Activated CD8-positive, alpha-beta memory T cell treated with anti-CD3 and anti-CD28 coated beads, Interleukin-2, amount 10 ng/mL, durations not matched to agents 7 days and 5 days (primary cell): ENCODE measurements at regions of chr15 and their contacts with region 1.

Region 1: DNA sequence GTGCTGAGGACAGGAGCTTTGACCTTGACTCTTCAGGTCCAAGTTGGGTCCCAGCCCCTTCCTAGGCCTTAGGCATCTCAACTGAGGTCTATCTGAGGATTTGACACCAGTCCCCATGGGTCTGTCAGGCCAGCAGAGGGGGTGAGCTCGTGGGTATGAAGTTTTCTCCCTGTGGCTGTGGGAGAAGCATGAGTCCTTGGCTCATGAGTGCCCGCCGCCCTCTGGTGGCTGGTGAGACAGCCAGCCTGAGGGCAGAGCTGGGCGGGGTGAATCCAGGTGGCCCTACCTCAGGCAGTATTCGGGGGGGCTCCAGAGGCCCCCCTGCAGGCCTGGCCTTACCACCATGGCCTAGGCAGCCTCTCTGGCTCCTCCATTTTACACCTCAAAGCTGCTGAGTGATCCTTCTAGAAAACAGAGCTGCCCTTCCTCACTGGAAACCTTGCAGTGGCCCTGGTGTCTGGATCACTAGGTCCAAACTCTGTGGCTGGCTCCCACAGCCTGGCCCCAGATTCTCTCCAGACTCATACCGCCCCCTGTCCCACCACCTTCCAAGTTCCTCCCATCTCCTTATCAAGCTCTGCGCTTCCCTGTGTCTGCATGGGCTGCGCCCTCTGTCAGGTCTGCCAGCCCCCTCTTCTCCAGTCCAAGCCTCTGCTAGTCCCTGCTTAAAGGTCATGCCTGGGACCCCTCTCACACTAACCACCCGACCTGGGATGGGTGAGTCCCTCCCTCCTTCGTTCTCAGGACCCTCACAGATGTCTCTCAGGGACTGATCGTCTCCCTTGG is 16.1 kb downstream of the SH2D7 start:
- DNase-seq: peak; percentile 92
- ATAC-seq: peak; percentile 71
- H3K4me3 Mint-ChIP-seq: no peak overlapping the region
- H3K27ac Mint-ChIP-seq: no peak overlapping the region
- H3K4me1 Mint-ChIP-seq: peaks cover 56% of the 10 kb centered on the region
- H3K27me3 Mint-ChIP-seq: no peaks in the 10 kb centered on the region

Region 2: GRCh38 chr15:77959432-77959879 is 149.0 kb before region 1 on chr15:
- CTCF ChIA-PET with region 1: interaction called, 189 read pairs
- DNase-seq: peak; percentile 86
- ATAC-seq: peak; percentile 98
- H3K4me3 Mint-ChIP-seq: peak overlapping the region; percentile 63
- H3K27ac Mint-ChIP-seq: no peak overlapping the region
- H3K4me1 Mint-ChIP-seq: peaks cover 27% of the 10 kb centered on the region
- H3K27me3 Mint-ChIP-seq: peaks cover 52% of the 10 kb centered on the region

Region 3: DNA sequence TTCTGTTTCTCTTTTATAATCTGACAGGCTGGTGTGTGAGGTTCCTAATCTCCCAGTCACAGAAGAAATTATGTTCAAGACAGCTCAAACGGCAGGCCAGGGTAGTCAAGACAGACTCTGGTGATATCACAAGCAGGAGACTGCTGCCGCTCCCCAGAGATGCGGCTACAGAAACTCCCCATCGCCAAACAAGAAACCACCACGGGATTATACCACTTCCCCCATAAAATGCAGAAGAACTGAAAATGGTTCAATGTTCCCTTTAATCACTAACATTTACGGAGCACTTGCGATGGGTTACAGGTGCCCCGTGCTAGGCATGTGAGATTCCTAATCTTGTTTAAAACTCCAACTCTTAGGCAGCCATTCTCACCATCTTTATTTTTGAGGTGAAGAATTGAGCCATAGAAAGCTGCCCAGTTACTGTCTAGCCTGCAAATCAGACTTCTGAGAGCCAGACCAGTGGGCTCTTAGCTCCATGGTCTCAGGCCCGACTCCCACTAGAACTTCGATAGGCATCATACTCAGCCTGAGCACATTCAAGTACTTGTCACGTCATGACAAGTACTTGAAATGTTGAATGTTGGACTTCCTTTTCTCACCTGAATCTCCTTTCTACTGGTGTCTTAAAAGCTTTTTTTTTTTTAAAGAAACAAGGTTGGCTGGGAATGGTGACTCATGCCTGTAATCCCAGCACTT is 89.4 kb before region 1 on chr15:
- CTCF ChIA-PET with region 1: interaction called, 23 read pairs
- DNase-seq: peak; percentile 67
- ATAC-seq: peak; percentile 80
- H3K4me3 Mint-ChIP-seq: peak overlapping the region; percentile 21
- H3K27ac Mint-ChIP-seq: peak overlapping the region; percentile 50
- H3K4me1 Mint-ChIP-seq: peaks cover 26% of the 10 kb centered on the region
- H3K27me3 Mint-ChIP-seq: no peaks in the 10 kb centered on the region

Region 4: DNA sequence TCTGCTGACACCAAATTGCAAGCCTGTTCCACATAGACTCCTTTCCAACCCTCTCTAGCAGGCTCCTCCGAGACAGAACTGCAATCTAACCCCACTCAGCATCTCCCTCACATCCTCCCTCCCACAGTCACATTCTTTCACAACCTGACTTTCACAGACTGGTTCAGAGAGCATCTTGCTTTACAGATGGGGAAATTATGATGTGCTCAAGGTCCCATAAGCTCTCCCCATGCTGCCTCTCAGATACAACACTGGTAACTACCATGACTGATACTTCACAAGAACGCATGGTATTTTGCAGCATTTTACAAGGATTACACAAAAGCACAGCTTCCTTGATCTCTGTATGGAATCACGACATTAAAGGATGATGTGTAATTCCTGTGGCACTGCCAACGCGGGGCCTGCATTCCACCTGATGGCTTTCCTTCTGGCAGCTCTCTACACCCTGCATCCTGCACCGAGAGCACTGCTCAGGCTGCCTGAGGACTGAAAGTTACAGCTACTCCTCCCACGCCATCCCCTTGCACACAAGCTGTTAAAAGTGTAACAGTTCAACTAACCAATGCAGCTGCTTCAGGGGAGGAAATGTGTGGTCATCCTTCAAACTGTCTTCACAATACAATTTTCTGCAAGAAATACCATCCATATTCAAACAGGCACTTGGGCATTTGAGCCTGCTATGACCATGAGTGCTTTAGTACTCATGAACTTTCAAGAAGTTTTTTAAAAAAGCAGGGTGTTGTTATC is 58.6 kb before region 1 on chr15:
- CTCF ChIA-PET with region 1: interaction called, 41 read pairs
- DNase-seq: peak; percentile 88
- ATAC-seq: peak; percentile 77
- H3K4me3 Mint-ChIP-seq: peak overlapping the region; percentile 48
- H3K27ac Mint-ChIP-seq: peak overlapping the region; percentile 94
- H3K4me1 Mint-ChIP-seq: peaks cover 96% of the 10 kb centered on the region
- H3K27me3 Mint-ChIP-seq: no peaks in the 10 kb centered on the region

Region 5: DNA sequence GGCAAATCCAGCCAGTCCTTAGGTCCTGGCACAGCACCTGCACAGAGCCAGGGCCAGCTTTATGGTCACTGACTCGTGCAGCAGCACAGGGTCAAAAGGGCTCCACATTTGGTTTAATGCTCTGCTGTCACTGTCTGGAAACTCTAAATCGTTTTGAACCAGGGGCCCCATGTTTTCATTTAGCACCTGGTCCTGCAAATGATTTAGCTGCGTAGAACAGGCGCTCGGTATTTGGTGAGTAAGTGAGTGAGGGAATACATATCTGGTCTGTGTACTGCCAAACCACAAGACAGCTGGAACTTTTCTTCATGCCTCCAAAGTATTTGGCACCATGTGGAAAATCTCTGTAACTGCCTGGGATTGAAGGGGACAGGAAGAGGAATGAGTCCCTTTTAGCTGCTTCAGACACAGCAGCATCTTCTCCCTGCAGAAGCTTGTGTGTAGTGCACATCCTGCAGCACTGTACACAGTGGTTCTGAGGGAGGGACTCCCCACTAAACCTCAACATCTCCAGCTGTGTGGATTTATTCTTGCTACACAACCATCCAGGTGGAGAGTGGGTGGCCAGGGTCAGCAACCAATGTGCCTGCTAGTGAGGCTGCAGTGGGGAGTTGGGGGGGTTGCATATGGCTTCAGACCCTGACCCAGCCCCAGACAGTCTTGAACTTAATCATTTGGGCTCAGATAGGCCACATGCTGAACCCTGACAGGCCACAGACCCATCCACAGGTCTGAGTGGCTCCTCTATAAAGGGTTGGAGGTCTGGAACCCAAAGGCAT is 15.1 kb before region 1 on chr15:
- CTCF ChIA-PET with region 1: interaction called, 34 read pairs
- DNase-seq: no peak
- ATAC-seq: peak; percentile 63
- H3K4me3 Mint-ChIP-seq: no peak overlapping the region
- H3K27ac Mint-ChIP-seq: peak overlapping the region; percentile 61
- H3K4me1 Mint-ChIP-seq: peaks cover 41% of the 10 kb centered on the region
- H3K27me3 Mint-ChIP-seq: no peaks in the 10 kb centered on the region

Region 6: GRCh38 chr15:78204351-78205309 is 96.1 kb after region 1 on chr15:
- CTCF ChIA-PET with region 1: interaction called, 14 read pairs
- DNase-seq: peak; percentile 31
- ATAC-seq: no peak
- H3K4me3 Mint-ChIP-seq: no peak overlapping the region
- H3K27ac Mint-ChIP-seq: no peak overlapping the region
- H3K4me1 Mint-ChIP-seq: no peaks in the 10 kb centered on the region
- H3K27me3 Mint-ChIP-seq: peaks cover 7% of the 10 kb centered on the region

Region 7: GRCh38 chr15:78340231-78341056 is 232.0 kb after region 1 on chr15 and contains the start of gene CRABP1:
- CTCF ChIA-PET with region 1: no interaction called
- DNase-seq: no peak
- ATAC-seq: peak; percentile 42
- H3K4me3 Mint-ChIP-seq: no peak within 1 kb of the TSS
- H3K27ac Mint-ChIP-seq: no peak within 1 kb of the TSS
- H3K4me1 Mint-ChIP-seq: peaks cover 8% of the 10 kb centered on the region
- H3K27me3 Mint-ChIP-seq: peaks cover 69% of the 10 kb centered on the region
- total RNA-seq, gene CRABP1: not detected

Region 8: DNA sequence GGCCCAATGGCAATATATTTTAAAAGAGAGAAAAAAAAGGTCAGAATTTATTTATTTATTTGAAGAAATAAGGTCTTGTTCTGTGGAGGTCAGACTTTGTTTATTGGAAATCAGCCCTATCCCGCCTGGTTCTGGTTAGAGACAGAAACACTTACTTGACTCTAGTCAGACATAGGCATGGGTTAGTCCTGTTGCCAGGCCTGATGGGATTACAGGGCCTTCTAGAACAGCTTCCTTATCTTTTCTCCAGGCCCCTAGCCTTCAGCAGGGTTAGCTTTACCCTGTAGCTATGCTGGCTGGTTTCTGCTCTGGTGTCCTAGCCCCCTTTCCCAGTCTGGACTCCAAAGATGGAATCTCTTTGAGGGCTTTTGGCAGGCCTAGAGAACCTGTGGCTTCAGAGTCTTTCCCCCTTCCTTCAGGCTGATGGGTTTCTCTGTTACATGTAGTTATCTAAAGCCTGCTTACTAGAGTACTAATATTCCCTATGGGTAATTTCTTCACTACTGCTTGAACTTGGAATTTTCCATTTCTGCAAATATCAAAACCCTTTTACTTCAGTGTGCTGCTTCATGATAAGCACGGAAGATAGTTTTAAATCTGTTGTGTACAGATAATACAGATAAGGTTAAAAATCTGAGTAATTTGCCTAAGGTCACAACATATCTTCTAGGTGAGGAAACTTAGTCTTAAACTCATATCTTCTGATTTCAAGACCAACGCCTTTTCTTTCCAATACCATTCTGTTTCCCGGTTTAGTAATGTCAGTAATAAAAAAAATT is 340.1 kb after region 1 on chr15:
- CTCF ChIA-PET with region 1: no interaction called
- DNase-seq: no peak
- ATAC-seq: no peak
- H3K4me3 Mint-ChIP-seq: no peak overlapping the region
- H3K27ac Mint-ChIP-seq: no peak overlapping the region
- H3K4me1 Mint-ChIP-seq: peaks cover 34% of the 10 kb centered on the region
- H3K27me3 Mint-ChIP-seq: no peaks in the 10 kb centered on the region